Prostate gland (tissue), 2 donors: ENCODE measurements at regions of chr11 and their contacts with region 1.

Region 1: DNA sequence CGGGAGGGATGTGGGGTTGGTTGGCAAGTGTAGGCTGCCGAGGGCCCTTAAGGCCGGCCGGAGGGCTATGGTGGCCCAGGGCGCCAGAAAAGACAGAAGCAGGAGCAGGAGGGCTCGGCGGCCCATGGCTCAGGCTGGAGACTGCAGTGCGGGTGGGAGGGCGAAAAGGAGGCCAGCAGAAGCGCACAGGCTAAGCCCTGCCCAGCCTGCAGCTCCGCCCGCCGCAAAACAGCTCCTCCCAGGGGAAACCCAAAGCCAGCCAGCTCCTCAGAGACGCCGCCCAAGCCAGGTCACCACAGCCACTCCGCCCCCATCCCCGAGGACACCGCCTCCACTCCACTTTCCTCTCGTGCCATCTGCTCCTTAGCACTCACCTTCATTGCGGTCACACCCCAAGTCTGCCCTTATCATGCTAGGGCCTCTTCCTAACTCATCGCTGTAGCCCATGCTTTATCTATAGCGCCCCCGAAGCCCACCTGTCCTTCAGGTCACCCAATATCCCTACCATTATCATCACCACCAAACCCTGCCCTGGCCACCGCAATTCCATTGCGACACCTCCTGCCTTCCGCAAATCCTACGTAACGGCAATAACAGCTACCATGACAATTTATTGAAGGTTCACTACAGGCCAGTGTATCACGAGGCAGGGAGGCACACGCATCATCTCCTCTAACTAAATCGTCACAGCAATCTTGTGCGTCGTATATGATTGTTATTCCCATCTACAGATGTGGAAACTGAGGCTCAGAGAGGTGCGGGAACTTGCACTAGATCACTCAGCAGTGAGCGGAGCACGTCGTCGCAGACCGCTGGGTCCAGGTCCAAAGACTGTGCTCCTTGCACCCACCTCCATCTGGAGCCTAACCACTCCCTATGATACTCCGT is at the start of gene PRCP:
- DNase-seq: peak; percentile 96
- H3K4me3 ChIP-seq: peak within 1 kb of the TSS; percentile 54 to 58
- H3K27ac ChIP-seq: peak within 1 kb of the TSS; percentile 94
- H3K4me1 ChIP-seq: no peaks in the 10 kb centered on the region
- H3K27me3 ChIP-seq: no peaks in the 10 kb centered on the region
- CTCF ChIP-seq: peak in 1 of 4 experiments; percentile 28
- POLR2A ChIP-seq: peak; percentile 95
- total RNA-seq, gene PRCP: 41.8 to 67.7 TPM

Region 2: GRCh38 chr11:82867495-82868082 is 32.9 kb before region 1 on chr11:
- intact Hi-C with region 1: loop called (anchors 5 kb)
- DNase-seq: peak; percentile 84
- H3K4me3 ChIP-seq: no peak overlapping the region
- H3K27ac ChIP-seq: no peak overlapping the region
- H3K4me1 ChIP-seq: no peaks in the 10 kb centered on the region
- H3K27me3 ChIP-seq: no peaks in the 10 kb centered on the region
- CTCF ChIP-seq: peak; percentile 49 to 77 (median 66)
- POLR2A ChIP-seq: no peak

Region 3: GRCh38 chr11:83007909-83008580 is 107.5 kb after region 1 on chr11:
- intact Hi-C with region 1: no loop called
- DNase-seq: no peak
- H3K4me3 ChIP-seq: no peak overlapping the region
- H3K27ac ChIP-seq: peak overlapping the region in 1 of 2 donors; percentile 12
- H3K4me1 ChIP-seq: peaks cover 13% of the 10 kb centered on the region
- H3K27me3 ChIP-seq: no peaks in the 10 kb centered on the region
- CTCF ChIP-seq: no peak
- POLR2A ChIP-seq: no peak

Region 4: DNA sequence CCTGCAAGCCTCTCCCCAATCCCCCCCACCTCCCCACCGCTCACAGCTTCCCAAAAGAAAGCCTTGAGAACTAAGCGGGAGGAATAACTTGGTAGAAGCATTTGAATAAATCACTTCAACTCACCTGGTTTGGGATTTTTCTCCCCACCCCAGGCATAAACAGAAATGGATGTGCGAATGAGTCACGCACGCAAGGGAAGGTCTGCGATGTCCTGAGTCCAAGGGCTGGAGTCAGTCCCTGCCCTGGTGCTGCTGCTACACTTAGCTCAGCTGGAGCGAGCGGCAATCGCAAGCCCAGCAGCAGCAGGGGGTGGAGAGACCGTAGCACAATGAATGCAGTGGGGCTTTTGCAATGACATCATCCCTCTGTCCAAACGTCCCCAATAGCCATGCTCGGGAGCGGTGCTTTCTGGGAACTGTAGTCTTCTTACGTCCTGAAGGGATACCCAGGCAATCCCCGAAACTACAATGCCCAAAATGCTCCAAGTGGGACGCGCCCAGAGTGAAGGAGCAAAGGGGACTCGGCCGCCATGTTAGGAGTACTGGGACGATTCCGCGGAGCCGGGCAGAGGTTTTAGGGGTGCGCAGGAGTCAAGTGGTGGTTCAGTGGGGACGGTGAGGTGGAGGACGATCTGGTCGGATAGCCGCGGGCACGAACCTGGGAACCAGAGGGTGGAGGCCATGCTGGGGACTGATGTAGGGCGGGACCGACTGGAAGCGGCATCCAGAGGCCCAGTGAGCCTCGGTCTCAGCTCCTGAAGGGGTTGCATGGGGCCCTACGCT is 171.2 kb after region 1 on chr11 and contains the start of gene RAB30:
- intact Hi-C with region 1: loop called (anchors 5 kb)
- DNase-seq: peak; percentile 99
- H3K4me3 ChIP-seq: peak within 1 kb of the TSS; percentile 84 to 90
- H3K27ac ChIP-seq: peak within 1 kb of the TSS; percentile 94 to 95
- H3K4me1 ChIP-seq: peaks cover 3% of the 10 kb centered on the region
- H3K27me3 ChIP-seq: no peaks in the 10 kb centered on the region
- CTCF ChIP-seq: peak in 2 of 4 experiments; percentile 5 to 18
- POLR2A ChIP-seq: peak; percentile 92
- total RNA-seq, gene RAB30: 13.3 to 15.9 TPM

Region 5: GRCh38 chr11:83162377-83162776 is 261.9 kb after region 1 on chr11:
- intact Hi-C with region 1: loop called (anchors 10 kb)
- DNase-seq: no peak
- H3K4me3 ChIP-seq: no peak overlapping the region
- H3K27ac ChIP-seq: peak overlapping the region; percentile 100
- H3K4me1 ChIP-seq: no peaks in the 10 kb centered on the region
- H3K27me3 ChIP-seq: no peaks in the 10 kb centered on the region
- CTCF ChIP-seq: no peak
- POLR2A ChIP-seq: no peak

Region 6: GRCh38 chr11:83193315-83194280 is 293.1 kb after region 1 on chr11 and contains the start of gene ANKRD42:
- intact Hi-C with region 1: loop called (anchors 5 kb)
- DNase-seq: peak; percentile 95
- H3K4me3 ChIP-seq: peak within 1 kb of the TSS; percentile 49 to 62
- H3K27ac ChIP-seq: peak within 1 kb of the TSS; percentile 80 to 85
- H3K4me1 ChIP-seq: peaks cover 10% of the 10 kb centered on the region
- H3K27me3 ChIP-seq: no peaks in the 10 kb centered on the region
- CTCF ChIP-seq: peak in 1 of 4 experiments; percentile 12
- POLR2A ChIP-seq: peak; percentile 79
- total RNA-seq, gene ANKRD42: 11.6 to 24.5 TPM

Region 7: DNA sequence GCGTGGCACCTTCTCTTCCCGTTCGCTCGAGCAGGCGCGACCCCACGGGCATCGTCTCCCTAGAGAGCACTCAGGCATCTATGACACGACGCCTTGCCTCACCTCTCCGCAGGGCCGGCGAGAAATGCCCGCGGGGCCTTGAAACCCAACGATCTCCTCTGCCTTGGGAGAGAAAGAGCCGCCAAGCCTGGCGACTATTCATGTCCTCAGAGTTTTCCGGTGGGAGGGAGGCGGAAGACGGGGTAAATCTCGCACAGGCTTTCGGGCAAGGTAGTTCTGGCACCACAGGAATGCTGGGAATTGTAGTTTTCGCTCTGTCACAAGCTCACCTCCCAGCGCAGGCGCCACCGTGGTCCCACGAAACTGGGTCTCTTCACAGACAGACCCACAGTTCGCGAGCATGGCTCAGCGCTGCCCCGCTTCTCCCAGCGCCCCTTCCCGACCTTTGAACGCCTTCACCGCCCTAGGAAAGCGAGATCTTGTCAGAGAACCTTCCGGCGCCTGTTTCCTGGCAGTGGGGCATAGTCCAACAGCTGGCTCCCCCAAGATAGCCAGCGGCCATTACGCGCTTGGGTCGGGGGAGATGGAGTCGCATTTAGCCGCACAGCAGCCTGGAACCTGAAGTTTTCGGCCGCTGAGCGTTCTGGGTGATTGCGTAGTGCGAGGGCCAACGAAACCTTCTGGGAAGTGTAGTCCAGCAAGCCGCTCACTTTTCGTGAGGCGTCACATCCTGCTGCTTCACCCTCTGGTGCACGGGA is 385.4 kb after region 1 on chr11 and contains the start of gene CCDC90B:
- intact Hi-C with region 1: loop called (anchors 5 kb)
- DNase-seq: peak; percentile 98
- H3K4me3 ChIP-seq: peak within 1 kb of the TSS; percentile 72
- H3K27ac ChIP-seq: peak within 1 kb of the TSS; percentile 96 to 97
- H3K4me1 ChIP-seq: peaks cover 12% of the 10 kb centered on the region
- H3K27me3 ChIP-seq: no peaks in the 10 kb centered on the region
- CTCF ChIP-seq: peak in 2 of 4 experiments; percentile 38 to 42
- POLR2A ChIP-seq: peak; percentile 81
- total RNA-seq, gene CCDC90B: 43.8 to 48.2 TPM